ENCODE measurements at regions of chr7 and their contacts with region 1.

Region 1: GRCh38 chr7:94276795-94277194 is 117.9 kb upstream of the COL1A2 start:
- DNase-seq: no peak
- H3K4me3 ChIP-seq: no peak overlapping the region
- CTCF ChIP-seq: peak; percentile 47

Region 2: GRCh38 chr7:93715234-93715633 is 561.6 kb before region 1 on chr7:
- CTCF ChIA-PET with region 1: interaction called, 12 read pairs
- POLR2A ChIA-PET with region 1: no interaction called
- DNase-seq: no peak
- H3K4me3 ChIP-seq: no peak overlapping the region
- CTCF ChIP-seq: peak; percentile 54

Region 3: GRCh38 chr7:94414481-94414880 is 137.7 kb after region 1 on chr7:
- CTCF ChIA-PET with region 1: no interaction called
- POLR2A ChIA-PET with region 1: no interaction called
- DNase-seq: no peak
- H3K4me3 ChIP-seq: no peak overlapping the region
- CTCF ChIP-seq: no peak